OCI-LY7 (cell line): ENCODE measurements at regions of chr19 and their contacts with region 1.

Region 1: DNA sequence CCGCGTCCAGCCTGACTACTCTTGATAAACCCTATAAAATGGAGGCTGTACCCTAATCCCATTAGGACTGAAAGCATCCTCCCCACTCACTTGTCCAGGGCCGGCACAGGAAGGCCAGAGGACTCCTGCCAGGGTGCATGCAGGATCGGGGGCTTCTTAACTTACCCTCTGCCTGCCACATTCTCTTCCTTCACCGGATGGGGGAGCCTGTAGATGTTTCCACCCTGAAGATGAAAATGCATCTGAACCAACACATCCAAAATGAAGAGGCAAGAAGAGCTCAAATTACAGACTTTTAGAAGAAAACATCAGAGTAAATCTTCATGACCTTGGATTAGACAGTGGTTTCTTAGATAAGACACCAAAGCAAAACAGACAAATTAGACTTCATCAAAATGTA is 25.9 kb upstream of the NAPA start:
- DNase-seq: peak; percentile 67
- H3K4me3 ChIP-seq: no peak overlapping the region
- H3K27ac ChIP-seq: no peak overlapping the region
- H3K4me1 ChIP-seq: peaks cover 18% of the 10 kb centered on the region
- CTCF ChIP-seq: peak; percentile 70

Region 2: DNA sequence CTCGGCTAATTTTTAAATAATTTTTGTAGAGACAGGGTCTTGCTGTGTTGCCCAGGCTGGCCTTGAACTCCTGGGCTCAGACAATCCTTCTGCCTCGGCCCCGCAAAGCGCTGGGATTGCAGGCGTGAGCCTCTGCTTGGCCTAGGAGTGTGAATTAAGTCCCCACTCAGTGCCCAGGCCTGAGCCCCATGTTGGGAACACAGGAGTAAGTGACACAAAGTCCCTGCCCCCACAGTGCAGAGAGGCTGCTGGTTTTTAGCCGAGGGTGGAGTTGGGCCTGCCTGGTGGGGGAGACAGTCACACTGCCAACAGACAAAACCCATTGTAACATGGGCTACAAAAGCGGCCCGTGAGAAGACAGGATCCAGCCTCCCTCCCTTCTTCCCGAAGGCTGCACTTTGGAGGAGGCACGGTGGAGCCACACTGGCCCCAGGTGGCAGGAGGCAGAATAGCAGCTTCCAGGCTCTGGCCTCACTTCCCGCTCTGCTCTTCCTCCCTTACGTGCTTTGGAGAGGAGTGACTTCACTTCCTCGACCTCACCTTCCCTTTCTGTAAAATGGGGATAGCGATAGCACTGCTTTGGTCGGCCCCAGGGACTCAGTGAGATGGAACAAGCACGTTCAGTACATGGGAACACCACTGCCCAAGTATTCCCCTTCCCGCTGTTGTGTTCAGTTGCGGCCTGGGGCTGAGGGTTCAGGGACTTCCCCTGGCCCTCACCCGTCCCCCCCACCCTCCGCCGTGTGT is 157.3 kb after region 1 on chr19:
- CTCF ChIA-PET with region 1: no interaction called
- POLR2A ChIA-PET with region 1: no interaction called
- intact Hi-C with region 1: loop called (anchors 2 kb)
- DNase-seq: peak; percentile 76
- H3K4me3 ChIP-seq: no peak overlapping the region
- H3K27ac ChIP-seq: peak overlapping the region; percentile 16
- H3K4me1 ChIP-seq: peaks cover 5% of the 10 kb centered on the region
- CTCF ChIP-seq: peak; percentile 94